ENCODE measurements at regions of chr1 and their contacts with region 1.

Region 1: GRCh38 chr1:58903514-58904298 is 119.9 kb upstream of the JUN start:
- DNase-seq: peak; percentile 91
- H3K4me3 Mint-ChIP-seq: peak overlapping the region; percentile 69
- H3K27ac Mint-ChIP-seq: peak overlapping the region; percentile 75
- H3K4me1 Mint-ChIP-seq: peaks cover 10% of the 10 kb centered on the region
- H3K27me3 Mint-ChIP-seq: no peaks in the 10 kb centered on the region

Region 2: DNA sequence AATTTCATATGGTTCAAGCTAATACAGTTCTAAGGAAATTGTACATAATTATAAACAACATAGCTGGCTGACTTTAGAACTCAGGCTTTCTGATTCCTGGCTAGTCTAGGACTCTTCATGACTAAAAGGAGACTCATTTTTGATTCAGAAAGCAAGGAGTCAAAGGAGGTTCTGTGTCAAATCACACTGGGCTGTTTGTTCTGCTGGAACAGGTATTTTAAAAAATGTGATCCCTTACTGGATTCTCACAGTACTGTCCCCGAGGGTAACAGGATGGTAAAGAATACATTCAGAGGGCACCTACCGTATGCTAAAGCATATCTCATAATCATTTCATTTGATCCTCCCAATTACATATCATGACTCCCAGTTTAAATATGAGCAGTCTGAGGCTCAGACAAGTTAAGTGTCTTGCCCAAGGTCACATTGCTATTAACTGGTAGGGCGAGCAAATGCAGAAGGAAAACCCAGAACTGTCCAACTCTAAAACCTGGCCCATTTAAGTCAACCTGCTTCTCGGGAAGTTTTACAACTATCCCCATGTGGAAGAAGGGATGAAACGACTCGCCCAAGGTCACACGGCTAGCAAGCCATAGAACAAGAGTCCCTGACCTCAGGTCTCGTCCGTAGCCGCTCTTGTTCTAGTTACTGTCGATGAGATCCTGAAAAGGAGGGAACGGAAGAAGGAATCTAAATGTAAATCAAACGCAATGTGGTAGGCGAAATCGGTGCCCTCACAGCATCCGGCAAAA is 204.5 kb before region 1 on chr1:
- CTCF ChIA-PET with region 1: no interaction called
- POLR2A ChIA-PET with region 1: no interaction called
- intact Hi-C with region 1: loop called (anchors 1 kb)
- DNase-seq: no peak
- H3K4me3 Mint-ChIP-seq: peak overlapping the region; percentile 95
- H3K27ac Mint-ChIP-seq: peak overlapping the region; percentile 92
- H3K4me1 Mint-ChIP-seq: peaks cover 15% of the 10 kb centered on the region
- H3K27me3 Mint-ChIP-seq: no peaks in the 10 kb centered on the region

Region 3: GRCh38 chr1:58816072-58816746 is 87.5 kb before region 1 on chr1:
- CTCF ChIA-PET with region 1: no interaction called
- POLR2A ChIA-PET with region 1: no interaction called
- intact Hi-C with region 1: loop called (anchors 1 kb)
- DNase-seq: peak; percentile 92
- H3K4me3 Mint-ChIP-seq: peak overlapping the region; percentile 81
- H3K27ac Mint-ChIP-seq: peak overlapping the region; percentile 85
- H3K4me1 Mint-ChIP-seq: peaks cover 41% of the 10 kb centered on the region
- H3K27me3 Mint-ChIP-seq: no peaks in the 10 kb centered on the region

Region 4: GRCh38 chr1:58841455-58841854 is 62.3 kb before region 1 on chr1:
- CTCF ChIA-PET with region 1: no interaction called
- POLR2A ChIA-PET with region 1: no interaction called
- intact Hi-C with region 1: no loop called
- DNase-seq: peak; percentile 35
- H3K4me3 Mint-ChIP-seq: no peak overlapping the region
- H3K27ac Mint-ChIP-seq: no peak overlapping the region
- H3K4me1 Mint-ChIP-seq: no peaks in the 10 kb centered on the region
- H3K27me3 Mint-ChIP-seq: no peaks in the 10 kb centered on the region

Region 5: GRCh38 chr1:58893257-58893869 is 10.3 kb before region 1 on chr1:
- CTCF ChIA-PET with region 1: no interaction called
- POLR2A ChIA-PET with region 1: no interaction called
- intact Hi-C with region 1: no loop called
- DNase-seq: no peak
- H3K4me3 Mint-ChIP-seq: no peak overlapping the region
- H3K27ac Mint-ChIP-seq: no peak overlapping the region
- H3K4me1 Mint-ChIP-seq: peaks cover 4% of the 10 kb centered on the region
- H3K27me3 Mint-ChIP-seq: peaks cover 2% of the 10 kb centered on the region

Region 6: GRCh38 chr1:58922302-58923089 is 18.8 kb after region 1 on chr1:
- CTCF ChIA-PET with region 1: no interaction called
- POLR2A ChIA-PET with region 1: interaction called, 3 read pairs
- intact Hi-C with region 1: loop called (anchors 1 kb)
- DNase-seq: peak; percentile 76
- H3K4me3 Mint-ChIP-seq: no peak overlapping the region
- H3K27ac Mint-ChIP-seq: peak overlapping the region; percentile 31
- H3K4me1 Mint-ChIP-seq: peaks cover 18% of the 10 kb centered on the region
- H3K27me3 Mint-ChIP-seq: no peaks in the 10 kb centered on the region

Region 7: DNA sequence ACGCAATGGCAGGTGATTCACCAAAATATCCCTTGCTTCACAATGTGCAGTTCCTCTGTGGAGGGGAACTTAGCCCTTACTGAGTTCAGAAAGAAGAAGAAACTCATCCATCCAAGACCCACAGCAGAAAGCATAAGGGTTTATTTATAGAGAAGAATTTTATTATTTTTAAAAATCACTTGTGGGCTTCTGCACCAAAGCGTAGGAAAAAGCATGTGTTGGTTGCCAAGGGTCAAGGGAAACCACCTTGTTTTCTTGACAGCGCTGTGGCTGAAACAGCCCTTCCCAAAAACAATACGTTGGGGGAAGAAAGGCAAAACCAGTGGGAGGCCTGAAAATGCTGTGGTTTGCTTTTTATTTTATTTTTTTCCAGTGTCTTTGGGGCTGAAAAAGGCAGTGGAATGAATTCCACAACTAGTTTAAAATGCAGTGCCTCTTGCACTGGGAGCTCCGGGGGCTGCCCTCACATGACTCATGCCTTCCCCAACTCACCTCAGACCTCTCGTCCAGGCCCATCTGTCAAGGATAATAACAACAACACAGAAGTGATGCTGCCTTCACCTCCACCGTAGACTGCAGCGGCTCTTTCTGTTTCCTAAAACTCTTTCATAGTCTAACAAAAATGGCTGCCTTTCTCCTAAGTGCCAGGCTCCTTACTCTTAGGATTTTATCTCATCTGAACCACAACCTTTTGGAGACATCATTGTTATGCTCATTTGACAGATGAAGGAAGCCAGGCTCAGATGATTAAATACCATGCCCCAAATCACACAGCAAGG is 104.3 kb after region 1 on chr1:
- CTCF ChIA-PET with region 1: no interaction called
- POLR2A ChIA-PET with region 1: no interaction called
- intact Hi-C with region 1: loop called (anchors 5 kb)
- DNase-seq: peak; percentile 64
- H3K4me3 Mint-ChIP-seq: no peak overlapping the region
- H3K27ac Mint-ChIP-seq: peak overlapping the region; percentile 59
- H3K4me1 Mint-ChIP-seq: peaks cover 43% of the 10 kb centered on the region
- H3K27me3 Mint-ChIP-seq: peaks cover 4% of the 10 kb centered on the region

Region 8: DNA sequence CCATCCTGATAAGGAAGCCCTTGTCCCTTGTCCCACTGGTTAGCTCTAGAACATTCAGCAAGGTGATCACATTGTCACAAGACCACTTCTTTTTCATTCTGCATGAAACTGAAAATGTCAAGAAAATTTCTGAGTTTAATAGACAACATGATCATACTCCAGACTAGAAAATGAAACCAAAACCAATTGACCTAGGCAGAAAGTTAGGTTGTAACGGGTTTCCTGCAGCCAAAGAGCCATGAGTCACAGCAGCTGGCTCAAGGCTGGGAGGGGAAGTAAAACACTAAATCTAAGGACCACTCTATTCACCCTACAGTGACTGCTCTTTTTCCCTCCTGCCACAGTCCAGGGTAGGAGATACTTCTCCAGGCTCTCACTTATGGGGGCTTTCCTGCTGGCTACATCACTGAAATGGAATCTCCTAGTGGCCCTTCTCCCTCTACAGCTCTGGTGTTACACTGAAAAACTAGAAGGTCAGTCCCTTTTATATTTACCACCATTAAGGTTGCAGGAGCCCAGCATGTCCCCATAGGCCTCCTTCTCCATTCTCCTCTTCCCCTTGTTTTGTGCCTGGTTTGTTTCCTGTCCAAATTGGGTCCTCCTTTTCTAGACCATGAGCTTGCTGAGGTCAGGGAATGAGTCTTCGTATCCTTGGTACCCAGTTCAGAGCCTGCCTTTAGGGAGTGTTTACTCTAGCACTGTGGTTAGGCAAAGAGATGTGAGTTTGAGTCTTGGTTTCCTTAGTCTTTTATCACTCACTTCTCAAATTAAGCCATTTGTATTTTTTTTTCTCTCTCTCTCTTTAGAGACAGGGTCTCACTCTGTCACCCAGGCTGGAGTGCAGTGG is 116.7 kb after region 1 on chr1:
- CTCF ChIA-PET with region 1: no interaction called
- POLR2A ChIA-PET with region 1: no interaction called
- intact Hi-C with region 1: loop called (anchors 2 kb)
- DNase-seq: peak; percentile 67
- H3K4me3 Mint-ChIP-seq: peak overlapping the region; percentile 46
- H3K27ac Mint-ChIP-seq: peak overlapping the region; percentile 87
- H3K4me1 Mint-ChIP-seq: peaks cover 25% of the 10 kb centered on the region
- H3K27me3 Mint-ChIP-seq: no peaks in the 10 kb centered on the region

Region 9: GRCh38 chr1:59150577-59151391 is 247.1 kb after region 1 on chr1:
- CTCF ChIA-PET with region 1: no interaction called
- POLR2A ChIA-PET with region 1: no interaction called
- intact Hi-C with region 1: loop called (anchors 10 kb)
- DNase-seq: peak; percentile 37
- H3K4me3 Mint-ChIP-seq: no peak overlapping the region
- H3K27ac Mint-ChIP-seq: no peak overlapping the region
- H3K4me1 Mint-ChIP-seq: peaks cover 16% of the 10 kb centered on the region
- H3K27me3 Mint-ChIP-seq: no peaks in the 10 kb centered on the region